Kidney (tissue), 22 donors: ENCODE measurements at regions of chr14 and their contacts with region 1.

Region 1: DNA sequence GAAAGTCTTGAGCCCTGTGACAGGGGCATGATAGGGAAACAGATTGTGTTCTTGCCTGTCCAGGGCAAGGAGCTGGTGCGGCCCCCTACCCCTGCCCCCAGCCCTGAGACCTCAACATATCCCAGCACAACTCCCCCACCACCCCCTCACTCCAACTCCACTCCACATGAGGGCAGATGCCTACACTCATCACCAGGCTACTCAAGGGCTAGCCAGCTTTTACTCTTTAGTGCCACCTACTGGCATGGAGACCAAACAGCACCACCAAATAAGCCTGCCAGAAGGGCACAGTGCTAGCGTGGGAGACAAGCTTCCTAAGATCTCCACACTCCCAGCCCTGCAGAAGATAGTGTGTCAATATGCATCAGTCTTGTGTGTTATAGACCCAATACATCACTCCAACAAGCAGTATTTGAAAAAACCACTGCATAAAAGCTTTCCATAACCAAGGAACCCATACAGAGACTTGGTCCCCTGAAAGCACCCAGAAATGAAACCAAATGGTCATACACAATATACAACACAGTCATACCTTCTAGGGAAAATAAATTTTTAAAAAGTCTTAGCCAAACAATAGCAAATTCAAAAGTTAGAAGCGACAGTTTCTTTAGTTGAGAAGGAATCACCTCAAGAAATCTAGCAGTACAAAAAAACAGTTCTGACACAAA is 154.4 kb downstream of the KCNK10 start:
- DNase-seq: peak in 2 of 5 donors; percentile 24 to 41
- H3K4me3 ChIP-seq: no peak overlapping the region
- H3K27ac ChIP-seq: no peak overlapping the region
- H3K4me1 ChIP-seq: no peaks in the 10 kb centered on the region
- H3K27me3 ChIP-seq: no peaks in the 10 kb centered on the region
- CTCF ChIP-seq: peak; percentile 88

Region 2: GRCh38 chr14:88023658-88024187 is 144.9 kb before region 1 on chr14:
- intact Hi-C with region 1: loop called (anchors 10 kb)
- DNase-seq: no peak
- H3K4me3 ChIP-seq: no peak overlapping the region
- H3K27ac ChIP-seq: no peak overlapping the region
- H3K4me1 ChIP-seq: no peaks in the 10 kb centered on the region
- H3K27me3 ChIP-seq: no peaks in the 10 kb centered on the region
- CTCF ChIP-seq: no peak

Region 3: DNA sequence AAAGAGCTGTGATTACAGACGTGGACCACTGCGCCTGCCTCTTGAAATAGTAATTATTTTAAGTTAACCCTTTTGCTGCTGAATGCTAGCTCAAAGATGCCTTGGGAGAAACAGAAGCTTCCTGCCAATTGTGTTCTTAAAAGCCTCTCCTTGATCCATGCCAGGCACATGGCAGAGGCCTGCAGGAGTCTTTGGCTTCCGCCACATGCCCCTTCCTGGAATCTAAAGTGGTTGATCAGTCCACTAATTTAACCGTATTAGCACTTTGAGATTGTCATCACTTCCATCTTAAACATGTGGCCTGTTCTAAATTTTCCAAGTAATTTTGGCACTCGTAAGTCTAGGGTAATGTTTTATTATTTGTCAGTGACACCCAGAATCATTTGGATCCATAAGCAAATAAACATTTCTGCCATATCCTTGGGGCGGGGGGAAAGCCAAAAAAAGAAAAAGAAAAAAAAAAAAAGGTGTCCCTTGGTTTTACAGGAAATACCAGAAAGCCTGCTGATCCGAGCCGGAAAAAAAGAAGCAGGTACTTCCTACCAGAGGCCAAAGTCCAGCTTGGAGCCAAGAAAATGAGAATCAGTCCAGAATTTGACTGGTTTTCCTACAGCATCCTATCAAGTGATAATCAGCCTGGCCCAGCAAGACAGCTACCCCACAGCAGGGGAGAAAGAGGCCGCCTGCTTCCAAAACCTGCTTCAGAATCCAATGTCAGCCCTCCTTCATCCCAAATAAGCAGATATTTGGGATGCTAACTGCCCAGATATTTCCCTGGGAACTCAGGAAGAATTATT is 49.7 kb after region 1 on chr14:
- intact Hi-C with region 1: no loop called
- DNase-seq: no peak
- H3K4me3 ChIP-seq: no peak overlapping the region
- H3K27ac ChIP-seq: no peak overlapping the region
- H3K4me1 ChIP-seq: no peaks in the 10 kb centered on the region
- H3K27me3 ChIP-seq: no peaks in the 10 kb centered on the region
- CTCF ChIP-seq: no peak

Region 4: DNA sequence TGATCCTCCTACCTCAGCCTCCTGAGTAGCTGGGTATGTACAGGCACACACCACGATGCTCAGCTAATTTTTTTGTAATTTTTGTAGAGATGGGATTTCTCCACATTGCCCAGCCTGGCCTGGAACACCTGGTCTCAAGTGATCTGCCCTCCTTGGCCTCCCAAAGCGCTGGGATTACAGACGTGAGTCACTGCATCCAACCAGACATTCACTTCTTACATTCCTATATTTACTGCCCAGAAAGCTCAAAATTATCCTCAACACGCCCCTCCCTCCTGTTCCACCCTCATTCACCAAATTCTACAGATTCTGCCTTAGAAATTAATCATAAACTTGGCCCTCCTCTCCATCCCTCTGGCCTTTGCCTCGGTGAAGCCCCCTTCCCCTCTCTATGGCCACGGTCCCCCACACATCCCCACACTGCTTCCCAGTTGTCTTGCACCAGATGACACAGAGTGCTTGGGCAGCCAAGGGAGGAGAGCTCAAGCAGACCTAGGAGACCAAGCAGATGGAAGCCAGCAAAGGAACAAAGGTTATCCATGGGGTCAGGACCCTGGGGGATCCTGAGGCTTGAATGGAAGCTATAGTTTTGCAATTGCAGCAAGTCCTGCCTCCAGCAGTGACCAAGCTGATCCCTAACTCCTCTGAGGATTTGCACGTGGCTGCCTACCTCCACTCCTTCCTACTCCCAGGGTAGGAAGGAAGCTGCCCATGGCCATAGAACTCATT is 1461.6 kb after region 1 on chr14:
- intact Hi-C with region 1: no loop called
- DNase-seq: no peak
- H3K4me3 ChIP-seq: no peak overlapping the region
- H3K27ac ChIP-seq: no peak overlapping the region
- H3K4me1 ChIP-seq: no peaks in the 10 kb centered on the region
- H3K27me3 ChIP-seq: no peaks in the 10 kb centered on the region
- CTCF ChIP-seq: no peak